ENCODE measurements at regions of chr3 and their contacts with region 1.

Region 1: GRCh38 chr3:136919799-136920580 is 37.8 kb upstream of the IL20RB start:
- DNase-seq: peak in 5 of 14 experiments; percentile 4 to 85 (median 79)
- ATAC-seq: peak; percentile 93
- H3K4me3 ChIP-seq: peak overlapping the region; percentile 1
- H3K4me3 Mint-ChIP-seq: peak overlapping the region; percentile 43
- H3K27ac ChIP-seq: peak overlapping the region; percentile 39 to 54
- H3K27ac Mint-ChIP-seq: peak overlapping the region; percentile 76
- H3K4me1 ChIP-seq: peaks cover 23% of the 10 kb centered on the region
- H3K4me1 Mint-ChIP-seq: peaks cover 88% of the 10 kb centered on the region
- H3K27me3 ChIP-seq: no peaks in the 10 kb centered on the region
- H3K27me3 Mint-ChIP-seq: no peaks in the 10 kb centered on the region
- CTCF ChIP-seq: no peak

Region 2: DNA sequence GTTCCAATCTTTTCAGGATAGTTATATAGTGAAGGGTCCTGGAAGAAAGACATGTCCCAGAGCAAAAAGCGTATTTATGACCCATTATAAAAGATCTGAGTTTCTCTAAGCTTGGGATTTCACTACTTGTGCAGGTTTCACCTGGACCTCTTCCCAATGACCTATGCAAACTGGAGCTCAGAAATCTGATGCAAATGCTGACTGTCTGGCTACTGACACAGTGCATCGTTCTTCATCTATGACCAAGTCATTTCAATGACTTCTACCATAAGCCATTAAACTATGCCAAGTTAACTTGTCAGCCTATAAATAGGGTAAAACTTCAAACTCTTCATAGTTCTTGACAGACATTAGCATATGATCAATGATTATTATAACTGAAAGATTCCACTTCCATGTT is 178.9 kb before region 1 on chr3:
- CTCF ChIA-PET with region 1: no interaction called
- POLR2A ChIA-PET with region 1: no interaction called
- intact Hi-C with region 1: no loop called
- DNase-seq: no peak
- ATAC-seq: no peak
- H3K4me3 ChIP-seq: no peak overlapping the region
- H3K4me3 Mint-ChIP-seq: no peak overlapping the region
- H3K27ac ChIP-seq: no peak overlapping the region
- H3K27ac Mint-ChIP-seq: no peak overlapping the region
- H3K4me1 ChIP-seq: peaks cover 11% of the 10 kb centered on the region
- H3K4me1 Mint-ChIP-seq: peaks cover 51% of the 10 kb centered on the region
- H3K27me3 ChIP-seq: no peaks in the 10 kb centered on the region
- H3K27me3 Mint-ChIP-seq: no peaks in the 10 kb centered on the region
- CTCF ChIP-seq: no peak

Region 3: DNA sequence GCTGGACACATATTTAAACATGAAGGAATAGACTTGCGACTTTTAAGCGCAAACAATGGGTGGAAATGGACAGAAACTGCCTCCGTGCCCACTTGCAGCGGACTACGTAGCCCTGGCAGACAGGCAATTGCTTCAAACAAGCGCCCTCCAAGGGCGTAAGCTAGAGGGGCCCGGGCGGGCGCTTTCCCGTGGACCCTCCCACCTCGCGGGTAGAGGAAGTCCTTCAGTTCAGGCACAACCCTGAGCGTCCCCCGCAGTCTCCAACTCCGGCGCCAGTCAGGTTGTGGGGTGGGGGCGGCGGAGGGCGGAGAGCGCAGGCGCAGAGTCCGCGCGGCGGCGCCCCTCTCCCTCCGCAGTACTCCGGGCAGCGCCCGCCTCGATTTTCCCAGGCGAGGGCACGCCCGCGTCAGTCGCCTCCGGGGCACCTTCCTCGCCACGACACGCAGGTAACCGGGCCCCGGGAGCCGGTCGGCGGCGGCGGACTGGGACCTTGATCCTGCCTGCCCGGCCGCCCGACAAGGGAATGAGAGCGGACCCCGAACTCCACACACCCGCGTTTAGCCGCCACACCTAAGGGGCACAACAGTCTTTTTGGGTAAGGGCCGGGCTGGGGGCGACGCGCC is 101.1 kb before region 1 on chr3 and contains the start of gene SLC35G2:
- CTCF ChIA-PET with region 1: no interaction called
- POLR2A ChIA-PET with region 1: no interaction called
- intact Hi-C with region 1: no loop called
- DNase-seq: peak in 9 of 14 experiments; percentile 1 to 43 (median 34)
- ATAC-seq: peak; percentile 47
- H3K4me3 ChIP-seq: peak within 1 kb of the TSS; percentile 68
- H3K4me3 Mint-ChIP-seq: peak within 1 kb of the TSS; percentile 86
- H3K27ac ChIP-seq: no peak within 1 kb of the TSS
- H3K27ac Mint-ChIP-seq: no peak within 1 kb of the TSS
- H3K4me1 ChIP-seq: peaks cover 23% of the 10 kb centered on the region
- H3K4me1 Mint-ChIP-seq: peaks cover 24% of the 10 kb centered on the region
- H3K27me3 ChIP-seq: peaks cover 29 to 31% of the 10 kb centered on the region in 2 experiments
- H3K27me3 Mint-ChIP-seq: peaks cover 57% of the 10 kb centered on the region
- CTCF ChIP-seq: no peak
- total RNA-seq, gene SLC35G2: 0.14 TPM in 1 of 2 experiments, not detected in the other

Region 4: DNA sequence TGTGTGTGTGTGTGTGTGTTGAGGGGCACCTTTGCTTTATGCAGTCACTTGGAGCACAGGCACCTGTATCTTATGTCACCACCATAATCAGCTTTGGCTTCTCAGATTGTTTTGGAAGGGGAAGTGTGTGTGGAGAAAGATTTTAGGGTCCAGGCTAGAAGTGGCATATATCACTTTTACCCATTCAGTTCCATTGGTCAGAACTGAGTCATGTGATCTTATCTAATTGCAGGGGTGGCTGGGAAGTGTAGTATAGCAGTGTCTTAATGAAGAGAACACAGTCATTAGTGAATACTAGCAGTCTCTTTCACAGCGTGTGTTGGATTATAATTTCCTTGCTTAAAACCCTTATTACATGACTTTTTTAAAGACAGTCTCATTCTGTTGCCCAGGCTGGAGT is 37.4 kb before region 1 on chr3:
- CTCF ChIA-PET with region 1: no interaction called
- POLR2A ChIA-PET with region 1: no interaction called
- intact Hi-C with region 1: loop called in 1 of 2 experiments (anchors 5 kb)
- DNase-seq: peak in 3 of 14 experiments; percentile 34 to 51 (median 38)
- ATAC-seq: peak; percentile 74
- H3K4me3 ChIP-seq: no peak overlapping the region
- H3K4me3 Mint-ChIP-seq: peak overlapping the region; percentile 36
- H3K27ac ChIP-seq: no peak overlapping the region
- H3K27ac Mint-ChIP-seq: peak overlapping the region; percentile 43
- H3K4me1 ChIP-seq: peaks cover 43% of the 10 kb centered on the region
- H3K4me1 Mint-ChIP-seq: peaks cover 87% of the 10 kb centered on the region
- H3K27me3 ChIP-seq: no peaks in the 10 kb centered on the region
- H3K27me3 Mint-ChIP-seq: no peaks in the 10 kb centered on the region
- CTCF ChIP-seq: no peak

Measured in CD4-positive, alpha-beta T cell (primary cell).